ENCODE measurements at regions of chr20 and their contacts with region 1.

Region 1: DNA sequence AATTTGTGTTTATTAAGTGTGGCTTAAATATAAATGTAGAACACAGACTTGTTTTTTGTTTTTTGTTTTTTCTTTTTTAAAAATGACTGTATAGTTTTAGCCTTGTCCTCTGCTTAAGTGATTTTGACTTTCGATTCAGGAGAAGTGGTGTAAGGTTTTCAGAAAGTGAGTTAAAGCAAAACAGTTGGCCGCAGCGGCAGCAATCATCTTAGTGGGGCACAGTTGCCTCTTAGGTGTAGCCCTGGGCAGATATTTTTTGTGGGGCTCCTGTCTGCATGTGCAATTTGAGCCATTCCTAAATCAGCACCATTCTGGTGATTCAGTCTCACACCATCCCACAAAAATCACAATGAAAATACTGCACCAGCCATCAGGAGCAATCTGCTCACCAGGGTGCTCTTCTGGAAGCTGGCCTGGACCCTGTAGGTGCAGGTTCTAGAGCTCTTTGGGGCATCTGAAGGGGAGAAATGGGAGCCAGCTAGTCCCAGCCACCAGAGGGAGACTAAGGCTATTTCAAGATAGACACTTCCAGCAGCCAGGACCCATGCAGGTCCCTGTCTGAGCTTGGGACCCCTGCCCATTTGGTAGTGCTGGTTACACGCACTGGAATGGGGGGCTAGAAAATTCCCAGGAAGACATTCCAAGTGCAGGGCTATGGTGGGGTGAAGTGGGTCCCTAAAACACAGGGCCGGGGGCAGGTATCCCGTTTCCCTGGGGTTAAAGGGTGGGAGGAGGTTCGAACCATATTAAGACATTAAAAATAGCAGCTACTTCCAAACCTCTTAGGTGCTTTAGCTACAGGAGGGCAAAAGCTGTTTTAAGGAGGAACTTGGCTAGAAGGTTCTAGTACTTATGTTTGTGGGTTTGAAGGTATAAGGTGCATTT is 156.6 kb downstream of the NFATC2 start:
- DNase-seq: peak; percentile 29 to 63 (median 37)
- H3K4me3 ChIP-seq: no peak overlapping the region
- H3K4me3 Mint-ChIP-seq: peak overlapping the region in 4 of 8 donors; percentile 13 to 50 (median 38)
- H3K27ac ChIP-seq: peak overlapping the region; percentile 13
- H3K27ac Mint-ChIP-seq: peak overlapping the region; percentile 35 to 85 (median 77)
- H3K4me1 ChIP-seq: peaks cover 47% of the 10 kb centered on the region
- H3K4me1 Mint-ChIP-seq: peaks cover 24 to 50% (median 36%) of the 10 kb centered on the region in 4 donors
- H3K27me3 ChIP-seq: no peaks in the 10 kb centered on the region
- H3K27me3 Mint-ChIP-seq: no peaks in the 10 kb centered on the region

Region 2: DNA sequence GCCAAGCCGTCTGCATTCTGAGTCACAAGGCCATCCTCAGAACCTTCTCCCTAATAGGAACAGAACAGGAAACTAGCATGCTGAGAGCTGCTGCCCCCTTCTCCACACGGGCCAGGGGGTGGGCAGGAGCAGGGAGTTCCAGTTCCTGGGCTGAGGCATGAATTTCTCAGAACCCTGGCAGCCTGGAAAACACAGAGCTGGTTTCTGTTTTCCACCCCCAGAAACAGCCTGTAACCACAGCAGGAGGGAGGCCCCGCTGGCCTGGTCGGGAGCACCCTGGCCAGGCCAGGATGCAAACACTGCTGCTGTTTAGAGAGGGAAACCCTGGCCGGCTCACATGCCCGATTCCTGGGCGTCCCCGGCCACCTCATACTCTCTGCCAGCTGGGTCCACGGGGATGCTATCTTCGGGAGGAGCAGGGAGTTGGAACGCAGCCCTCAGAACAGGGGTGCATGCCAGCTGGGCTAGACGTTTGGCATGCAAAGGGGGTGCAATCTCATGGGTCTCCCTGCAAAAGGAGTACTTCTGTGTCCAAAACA is 26.5 kb after region 1 on chr20:
- CTCF ChIA-PET with region 1: interaction called, 54 read pairs
- POLR2A ChIA-PET with region 1: interaction called, 14 read pairs
- intact Hi-C with region 1: no loop called
- DNase-seq: no peak
- H3K4me3 ChIP-seq: no peak overlapping the region
- H3K4me3 Mint-ChIP-seq: peak overlapping the region in 5 of 8 donors; percentile 10 to 64 (median 31)
- H3K27ac ChIP-seq: peak overlapping the region; percentile 32
- H3K27ac Mint-ChIP-seq: peak overlapping the region; percentile 48 to 87 (median 73)
- H3K4me1 ChIP-seq: peaks cover 94% of the 10 kb centered on the region
- H3K4me1 Mint-ChIP-seq: peaks cover 52 to 90% (median 69%) of the 10 kb centered on the region in 4 donors
- H3K27me3 ChIP-seq: no peaks in the 10 kb centered on the region
- H3K27me3 Mint-ChIP-seq: no peaks in the 10 kb centered on the region

Region 3: GRCh38 chr20:51450221-51450712 is 64.4 kb after region 1 on chr20:
- CTCF ChIA-PET with region 1: interaction called, 15 read pairs
- POLR2A ChIA-PET with region 1: no interaction called
- intact Hi-C with region 1: no loop called
- DNase-seq: no peak
- H3K4me3 ChIP-seq: no peak overlapping the region
- H3K4me3 Mint-ChIP-seq: no peak overlapping the region
- H3K27ac ChIP-seq: no peak overlapping the region
- H3K27ac Mint-ChIP-seq: peak overlapping the region in 3 of 7 donors; percentile 50 to 84 (median 71)
- H3K4me1 ChIP-seq: peaks cover 6% of the 10 kb centered on the region
- H3K4me1 Mint-ChIP-seq: peaks cover 24 to 62% (median 30%) of the 10 kb centered on the region in 4 donors
- H3K27me3 ChIP-seq: no peaks in the 10 kb centered on the region
- H3K27me3 Mint-ChIP-seq: no peaks in the 10 kb centered on the region

Region 4: DNA sequence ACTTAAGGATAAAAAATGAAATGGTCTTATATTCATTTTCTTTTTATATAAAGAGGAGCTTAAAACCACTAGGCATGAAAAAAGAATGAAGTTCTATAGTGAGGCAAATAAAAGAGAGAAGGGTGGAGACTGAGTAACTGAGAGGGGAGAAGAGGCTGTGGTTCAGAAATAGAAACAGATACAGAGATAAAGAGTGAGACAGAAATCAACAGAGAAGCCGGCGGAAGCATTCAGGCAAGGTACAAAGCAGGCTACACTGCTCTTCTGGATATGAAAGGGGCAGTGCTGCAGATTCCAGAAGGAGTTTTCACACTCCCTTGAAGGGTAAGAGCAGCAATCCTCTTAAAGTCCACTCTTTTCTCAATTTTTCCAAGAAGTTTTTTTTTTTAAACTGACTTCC is 126.8 kb after region 1 on chr20:
- CTCF ChIA-PET with region 1: interaction called, 15 read pairs
- POLR2A ChIA-PET with region 1: interaction called, 3 read pairs
- intact Hi-C with region 1: no loop called
- DNase-seq: peak in 3 of 5 donors; percentile 35 to 50 (median 35)
- H3K4me3 ChIP-seq: no peak overlapping the region
- H3K4me3 Mint-ChIP-seq: peak overlapping the region; percentile 33 to 71 (median 56)
- H3K27ac ChIP-seq: peak overlapping the region; percentile 31
- H3K27ac Mint-ChIP-seq: peak overlapping the region; percentile 55 to 95 (median 85)
- H3K4me1 ChIP-seq: peaks cover 86% of the 10 kb centered on the region
- H3K4me1 Mint-ChIP-seq: peaks cover 63 to 91% (median 75%) of the 10 kb centered on the region in 4 donors
- H3K27me3 ChIP-seq: no peaks in the 10 kb centered on the region
- H3K27me3 Mint-ChIP-seq: no peaks in the 10 kb centered on the region

Region 5: DNA sequence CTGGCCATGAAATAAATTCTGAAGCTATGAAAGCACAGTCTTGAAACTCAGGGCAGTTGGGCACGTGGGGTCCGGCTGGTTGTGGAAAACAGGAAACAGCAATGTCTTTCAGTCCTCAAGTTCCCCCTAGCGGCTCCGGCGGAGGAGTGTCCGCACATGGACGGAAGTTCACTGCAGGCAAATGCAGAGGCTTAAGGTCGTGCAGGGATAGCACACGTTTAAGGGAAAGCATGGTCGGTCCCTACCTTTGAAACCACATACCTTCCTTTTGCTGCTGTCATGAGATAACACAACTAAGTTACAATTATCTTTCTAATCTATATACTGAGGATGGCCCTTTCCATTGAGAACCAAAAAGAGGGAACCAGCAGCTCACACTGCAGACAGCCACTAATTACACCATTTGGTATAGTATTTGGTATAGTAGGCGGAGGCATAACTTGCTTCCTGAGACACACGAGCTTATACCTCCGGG is 209.2 kb after region 1 on chr20:
- CTCF ChIA-PET with region 1: interaction called, 85 read pairs
- POLR2A ChIA-PET with region 1: interaction called, 12 read pairs
- intact Hi-C with region 1: loop called (anchors 1 kb)
- DNase-seq: peak; percentile 62 to 72 (median 69)
- H3K4me3 ChIP-seq: no peak overlapping the region
- H3K4me3 Mint-ChIP-seq: peak overlapping the region in 7 of 8 donors; percentile 4 to 63 (median 36)
- H3K27ac ChIP-seq: no peak overlapping the region
- H3K27ac Mint-ChIP-seq: peak overlapping the region in 3 of 7 donors; percentile 27 to 68 (median 38)
- H3K4me1 ChIP-seq: peaks cover 10% of the 10 kb centered on the region
- H3K4me1 Mint-ChIP-seq: peaks cover 6 to 12% (median 8%) of the 10 kb centered on the region in 4 donors
- H3K27me3 ChIP-seq: no peaks in the 10 kb centered on the region
- H3K27me3 Mint-ChIP-seq: peaks cover 3 to 6% of the 10 kb centered on the region in 2 donors

Region 6: GRCh38 chr20:51758978-51759544 is 373.2 kb after region 1 on chr20:
- CTCF ChIA-PET with region 1: no interaction called
- POLR2A ChIA-PET with region 1: no interaction called
- intact Hi-C with region 1: no loop called
- DNase-seq: no peak
- H3K4me3 ChIP-seq: no peak overlapping the region
- H3K4me3 Mint-ChIP-seq: no peak overlapping the region
- H3K27ac ChIP-seq: no peak overlapping the region
- H3K27ac Mint-ChIP-seq: no peak overlapping the region
- H3K4me1 ChIP-seq: no peaks in the 10 kb centered on the region
- H3K4me1 Mint-ChIP-seq: no peaks in the 10 kb centered on the region
- H3K27me3 ChIP-seq: no peaks in the 10 kb centered on the region
- H3K27me3 Mint-ChIP-seq: peaks cover 6% of the 10 kb centered on the region in 2 donors

Measured in CD4-positive, alpha-beta memory T cell (primary cell).